Activated B cell treated with CpG ODN at 0.5 μM for 24 hours (primary cell): ENCODE measurements at regions of chr12 and their contacts with region 1.

Region 1: GRCh38 chr12:52050761-52051541 is at the start of gene NR4A1:
- DNase-seq: peak; percentile 100
- ATAC-seq: peak; percentile 82
- H3K4me3 Mint-ChIP-seq: peak within 1 kb of the TSS; percentile 92
- H3K27ac Mint-ChIP-seq: peak within 1 kb of the TSS; percentile 95
- H3K4me1 Mint-ChIP-seq: peaks cover 49% of the 10 kb centered on the region
- H3K27me3 Mint-ChIP-seq: no peaks in the 10 kb centered on the region
- CTCF ChIP-seq: no peak
- total RNA-seq, gene NR4A1: 18.8 and 24.2 TPM in 2 replicates

Region 2: GRCh38 chr12:51198568-51199365 is 852.2 kb before region 1 on chr12:
- CTCF ChIA-PET with region 1: no interaction called
- POLR2A ChIA-PET with region 1: no interaction called
- intact Hi-C with region 1: no loop called
- DNase-seq: no peak
- ATAC-seq: no peak
- H3K4me3 Mint-ChIP-seq: no peak overlapping the region
- H3K27ac Mint-ChIP-seq: no peak overlapping the region
- H3K4me1 Mint-ChIP-seq: no peaks in the 10 kb centered on the region
- H3K27me3 Mint-ChIP-seq: no peaks in the 10 kb centered on the region
- CTCF ChIP-seq: no peak

Region 3: DNA sequence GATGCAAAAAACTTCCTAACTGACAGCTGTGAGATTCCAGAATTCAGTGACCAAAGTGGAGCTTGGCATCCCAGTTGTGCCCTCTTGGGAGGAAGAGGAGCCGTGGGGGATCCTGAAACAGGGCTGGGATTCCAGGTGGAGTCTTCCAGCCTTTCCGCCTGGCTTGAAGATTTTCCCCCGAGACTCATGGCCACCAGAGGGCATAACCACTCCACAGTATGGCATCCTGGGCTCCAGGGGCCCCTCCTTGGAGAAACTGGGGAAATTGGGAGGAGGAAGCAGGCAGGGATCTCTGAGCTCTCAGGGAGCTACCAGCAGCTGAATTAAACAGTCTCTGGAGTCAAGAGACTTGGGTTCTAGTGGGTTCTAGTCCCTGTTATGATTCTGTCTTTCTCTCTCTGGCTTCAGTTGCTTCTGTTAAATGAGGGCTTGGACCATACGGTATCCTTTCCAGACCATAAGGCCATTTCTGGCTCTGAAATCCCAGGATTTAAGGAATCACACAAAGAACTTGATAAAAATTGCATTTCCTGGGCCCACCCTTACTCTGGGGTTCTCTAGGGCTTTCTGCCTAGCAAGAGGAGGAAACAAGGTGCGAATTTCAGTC is 46.8 kb before region 1 on chr12:
- CTCF ChIA-PET with region 1: no interaction called
- POLR2A ChIA-PET with region 1: interaction called, 29 read pairs
- intact Hi-C with region 1: loop called (anchors 1 kb)
- DNase-seq: no peak
- ATAC-seq: no peak
- H3K4me3 Mint-ChIP-seq: no peak overlapping the region
- H3K27ac Mint-ChIP-seq: no peak overlapping the region
- H3K4me1 Mint-ChIP-seq: peaks cover 39% of the 10 kb centered on the region
- H3K27me3 Mint-ChIP-seq: no peaks in the 10 kb centered on the region
- CTCF ChIP-seq: no peak

Region 4: DNA sequence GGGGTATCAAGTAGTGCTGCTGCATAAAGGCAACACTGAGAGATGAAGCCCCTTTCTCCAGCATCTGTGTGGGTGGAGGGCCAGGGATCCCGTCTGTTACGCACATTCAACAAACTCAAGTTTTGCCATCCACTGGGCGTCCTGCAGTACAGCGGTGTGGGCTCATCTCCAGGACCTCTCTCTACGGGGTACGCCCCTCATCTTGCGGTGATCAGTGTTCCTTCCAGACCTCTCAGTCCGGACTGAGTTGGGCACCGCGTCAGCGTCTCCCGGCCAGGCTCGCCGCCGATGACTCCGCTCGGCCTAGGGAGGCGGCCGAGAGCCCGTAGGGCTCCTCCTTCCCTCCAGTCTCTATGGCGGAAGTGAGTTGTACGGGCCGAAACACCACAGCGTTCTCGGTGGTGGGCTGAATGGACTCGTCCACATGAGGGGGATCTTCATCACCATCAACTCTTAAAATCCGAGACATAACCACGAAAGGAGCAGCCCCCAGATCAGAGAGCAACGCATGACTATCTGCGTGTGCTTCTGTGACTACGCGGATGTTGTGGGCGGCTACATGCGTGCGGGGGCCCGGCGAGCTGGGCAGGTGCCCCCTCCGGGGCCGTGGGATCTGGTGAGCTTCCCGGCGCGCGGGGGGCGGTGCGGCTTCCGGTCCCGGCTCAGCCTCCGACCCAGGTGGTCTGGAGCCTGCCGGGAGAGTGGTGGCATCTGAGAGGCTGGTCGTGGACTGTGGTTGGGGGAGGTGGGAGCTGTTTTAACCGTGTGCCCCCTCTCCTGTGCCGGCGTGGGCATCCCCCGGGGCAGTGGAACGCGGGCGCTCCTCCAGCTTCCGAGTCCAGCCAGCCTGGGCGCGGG is 18.6 kb after region 1 on chr12 and contains the start of gene ATG101:
- CTCF ChIA-PET with region 1: interaction called, 11 read pairs
- POLR2A ChIA-PET with region 1: interaction called, 99 read pairs
- intact Hi-C with region 1: loop called (anchors 1 kb)
- DNase-seq: peak; percentile 87
- ATAC-seq: peak; percentile 94
- H3K4me3 Mint-ChIP-seq: peak within 1 kb of the TSS; percentile 87
- H3K27ac Mint-ChIP-seq: peak within 1 kb of the TSS; percentile 96
- H3K4me1 Mint-ChIP-seq: peaks cover 47% of the 10 kb centered on the region
- H3K27me3 Mint-ChIP-seq: no peaks in the 10 kb centered on the region
- CTCF ChIP-seq: peak; percentile 31
- total RNA-seq, gene ATG101: 25.6 and 32.5 TPM in 2 replicates